Aorta (tissue), 5 donors: ENCODE measurements at regions of chr5 and their contacts with region 1.

Region 1: GRCh38 chr5:16934123-16934522 is 2.0 kb downstream of the MYO10 start:
- DNase-seq: peak in 1 of 2 donors; percentile 71
- ATAC-seq: no peak
- H3K4me3 ChIP-seq: peak overlapping the region in 1 of 2 donors; percentile 50
- H3K27ac ChIP-seq: no peak overlapping the region
- H3K4me1 ChIP-seq: no peaks in the 10 kb centered on the region
- H3K27me3 ChIP-seq: no peaks in the 10 kb centered on the region

Region 2: GRCh38 chr5:16736158-16736995 is 197.7 kb before region 1 on chr5:
- intact Hi-C with region 1: no loop called
- DNase-seq: no peak
- ATAC-seq: no peak
- H3K4me3 ChIP-seq: no peak overlapping the region
- H3K27ac ChIP-seq: no peak overlapping the region
- H3K4me1 ChIP-seq: no peaks in the 10 kb centered on the region
- H3K27me3 ChIP-seq: no peaks in the 10 kb centered on the region

Region 3: DNA sequence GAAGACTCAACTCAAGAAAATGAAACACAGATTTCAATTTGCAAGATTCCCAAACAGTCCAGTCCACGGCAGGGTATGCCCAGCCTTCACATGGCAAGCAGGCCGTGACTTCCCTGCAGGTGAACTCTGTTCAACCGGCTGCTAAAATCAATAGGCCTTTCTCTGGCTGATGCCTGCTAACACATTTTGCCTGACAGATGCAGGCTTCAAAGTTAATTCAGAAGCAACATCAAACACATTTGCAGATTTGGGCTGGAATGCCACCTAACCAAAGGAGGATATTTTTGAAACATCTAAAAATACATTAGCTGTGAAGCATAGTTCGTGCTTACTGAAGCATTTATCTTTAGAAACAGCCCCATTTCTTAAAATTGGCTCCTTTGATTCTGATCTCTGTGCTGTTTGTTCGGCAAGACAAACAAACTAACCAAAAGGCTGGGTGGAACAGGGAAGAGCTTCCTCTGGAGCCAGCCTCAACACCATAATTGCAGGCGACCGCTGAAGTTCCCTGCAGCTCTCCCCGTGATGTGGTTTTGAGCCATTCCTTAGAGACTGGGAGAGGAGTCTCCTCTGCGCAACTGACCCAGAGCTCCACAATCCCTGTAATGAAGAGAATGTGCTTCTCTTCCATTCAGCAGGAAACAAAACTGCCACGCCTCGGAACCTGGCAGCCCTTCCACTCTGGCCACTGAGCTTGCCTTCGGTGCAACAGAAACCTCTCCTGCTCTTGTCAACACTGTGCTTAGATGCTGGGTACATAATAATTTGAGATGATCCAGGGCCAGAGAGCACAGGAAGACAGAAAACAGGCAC is 124.5 kb before region 1 on chr5:
- intact Hi-C with region 1: loop called in 1 of 2 experiments (anchors 10 kb)
- DNase-seq: no peak
- ATAC-seq: no peak
- H3K4me3 ChIP-seq: no peak overlapping the region
- H3K27ac ChIP-seq: no peak overlapping the region
- H3K4me1 ChIP-seq: no peaks in the 10 kb centered on the region
- H3K27me3 ChIP-seq: no peaks in the 10 kb centered on the region

Region 4: GRCh38 chr5:16819522-16820167 is 114.5 kb before region 1 on chr5:
- intact Hi-C with region 1: loop called (anchors 5 to 10 kb)
- DNase-seq: no peak
- ATAC-seq: peak; percentile 33
- H3K4me3 ChIP-seq: no peak overlapping the region
- H3K27ac ChIP-seq: peak overlapping the region in 1 of 2 donors; percentile 95
- H3K4me1 ChIP-seq: no peaks in the 10 kb centered on the region
- H3K27me3 ChIP-seq: no peaks in the 10 kb centered on the region

Region 5: GRCh38 chr5:16866795-16867236 is 67.3 kb before region 1 on chr5:
- intact Hi-C with region 1: loop called in 1 of 2 experiments (anchors 2 kb)
- DNase-seq: peak; percentile 63 to 80
- ATAC-seq: no peak
- H3K4me3 ChIP-seq: no peak overlapping the region
- H3K27ac ChIP-seq: peak overlapping the region in 1 of 2 donors; percentile 11
- H3K4me1 ChIP-seq: peaks cover 0 to 4% of the 10 kb centered on the region in 2 donors
- H3K27me3 ChIP-seq: no peaks in the 10 kb centered on the region

Region 6: DNA sequence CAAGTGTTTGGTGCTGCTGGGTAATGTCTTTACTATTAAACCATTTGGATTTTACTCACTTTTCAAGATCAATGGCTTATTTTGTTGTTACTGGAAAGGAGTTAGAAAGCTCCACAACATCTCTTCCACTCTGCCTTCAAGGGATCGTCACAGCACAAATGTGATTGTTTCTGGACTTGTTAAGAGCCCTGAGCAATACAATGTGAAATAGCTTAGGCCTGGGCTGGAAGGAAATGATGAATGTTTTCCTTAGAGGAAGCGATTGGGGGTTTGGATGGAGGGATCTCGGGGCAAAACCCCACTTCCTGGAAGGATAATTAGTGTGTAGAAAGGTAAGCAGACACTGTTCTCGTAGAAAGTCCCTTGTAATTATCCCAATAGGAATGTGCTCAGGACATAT is 61.2 kb after region 1 on chr5:
- intact Hi-C with region 1: loop called in 1 of 2 experiments (anchors 5 kb)
- DNase-seq: no peak
- ATAC-seq: no peak
- H3K4me3 ChIP-seq: no peak overlapping the region
- H3K27ac ChIP-seq: no peak overlapping the region
- H3K4me1 ChIP-seq: no peaks in the 10 kb centered on the region
- H3K27me3 ChIP-seq: no peaks in the 10 kb centered on the region

Region 7: DNA sequence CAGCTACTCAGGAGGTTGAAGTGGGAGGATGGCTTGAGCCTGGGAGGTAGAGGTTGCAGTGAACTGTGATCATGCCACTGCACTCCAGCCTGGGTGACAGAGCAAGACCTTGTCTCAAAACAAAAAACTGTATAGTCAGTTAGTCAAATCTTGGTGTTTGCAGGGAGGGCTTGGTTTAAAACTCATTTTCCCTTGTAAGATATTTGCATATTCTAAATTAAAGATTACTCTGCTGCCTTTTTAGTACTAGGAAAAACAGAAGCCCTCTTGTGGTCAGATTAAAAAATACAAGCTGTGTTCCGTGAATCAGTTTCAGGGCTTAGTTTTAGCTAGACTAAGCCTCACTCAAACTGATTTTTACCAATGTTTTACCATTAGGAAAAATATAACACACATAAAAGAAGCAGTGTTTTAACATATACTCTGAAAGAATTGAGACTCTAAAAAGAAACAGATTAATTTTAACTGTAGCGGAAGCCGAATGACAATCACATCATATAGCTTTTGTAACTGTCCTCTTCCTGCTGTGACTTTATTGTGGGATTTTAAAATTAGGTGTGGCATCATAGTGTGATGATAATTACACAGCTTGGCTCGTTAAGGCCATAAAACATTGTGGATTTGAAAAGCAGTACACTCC is 198.4 kb after region 1 on chr5:
- intact Hi-C with region 1: loop called (anchors 5 to 10 kb)
- DNase-seq: no peak
- ATAC-seq: no peak
- H3K4me3 ChIP-seq: no peak overlapping the region
- H3K27ac ChIP-seq: no peak overlapping the region
- H3K4me1 ChIP-seq: peaks cover 2 to 5% of the 10 kb centered on the region in 2 donors
- H3K27me3 ChIP-seq: no peaks in the 10 kb centered on the region

Region 8: GRCh38 chr5:17189381-17190036 is 255.4 kb after region 1 on chr5:
- intact Hi-C with region 1: loop called (anchors 5 to 10 kb)
- DNase-seq: peak; percentile 80 to 90
- ATAC-seq: peak; percentile 69
- H3K4me3 ChIP-seq: no peak overlapping the region
- H3K27ac ChIP-seq: no peak overlapping the region
- H3K4me1 ChIP-seq: no peaks in the 10 kb centered on the region
- H3K27me3 ChIP-seq: no peaks in the 10 kb centered on the region